Caki2 (cell line): ENCODE measurements at regions of chr2 and their contacts with region 1.

Region 1: DNA sequence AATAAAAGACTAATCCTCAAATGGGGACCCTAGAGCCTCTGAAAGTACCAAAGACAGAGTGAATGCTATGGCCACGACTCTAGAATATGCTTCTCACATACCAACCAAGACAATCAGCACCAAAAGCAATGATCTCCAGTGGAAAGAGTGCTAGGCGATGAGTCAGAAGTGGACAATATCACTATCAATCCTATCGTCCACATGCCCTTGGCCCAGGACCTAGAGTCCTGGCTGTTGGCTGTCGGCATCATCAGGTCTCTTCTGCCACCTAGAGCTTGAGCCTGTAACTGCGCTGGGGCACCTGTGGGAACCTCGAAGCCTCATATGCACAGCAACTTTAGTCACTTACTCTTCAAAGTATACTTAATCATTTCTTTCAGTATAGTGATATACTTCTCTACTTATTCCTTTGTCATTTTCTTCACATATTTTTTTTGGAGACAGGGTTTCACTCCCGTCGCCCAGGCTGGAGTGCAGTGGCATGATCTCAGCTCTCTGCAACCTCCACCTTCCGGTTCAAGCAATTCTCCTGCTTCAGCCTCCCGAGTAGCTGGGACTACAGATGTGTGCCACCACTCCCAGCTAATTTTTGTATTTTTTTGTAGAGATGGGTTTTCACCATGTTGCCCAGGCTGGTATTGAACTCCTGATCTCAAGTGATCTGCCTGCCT is 29.7 kb downstream of the NOL10 start:
- DNase-seq: peak; percentile 46

Region 2: DNA sequence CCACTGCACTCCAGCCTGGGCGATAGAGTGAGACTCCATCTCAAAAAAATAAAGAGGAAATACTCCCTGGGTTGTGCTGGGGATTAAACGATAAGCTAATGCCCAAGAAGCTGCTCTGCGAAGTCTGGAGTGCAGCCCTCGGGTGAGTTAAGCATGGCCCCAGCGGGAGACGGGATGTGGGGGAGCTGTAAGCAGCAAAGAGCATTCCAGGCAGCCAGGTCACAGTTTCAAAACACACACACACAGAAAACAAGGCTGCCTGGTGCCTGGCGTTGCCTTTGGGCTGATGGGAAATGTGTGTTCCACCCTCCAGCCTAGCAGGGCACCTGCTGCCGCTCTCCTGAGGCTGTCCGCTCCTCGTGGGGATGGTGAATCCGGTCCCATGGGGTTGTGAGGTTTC is 236.0 kb before region 1 on chr2:
- in situ Hi-C with region 1: no loop called
- DNase-seq: no peak

Region 3: DNA sequence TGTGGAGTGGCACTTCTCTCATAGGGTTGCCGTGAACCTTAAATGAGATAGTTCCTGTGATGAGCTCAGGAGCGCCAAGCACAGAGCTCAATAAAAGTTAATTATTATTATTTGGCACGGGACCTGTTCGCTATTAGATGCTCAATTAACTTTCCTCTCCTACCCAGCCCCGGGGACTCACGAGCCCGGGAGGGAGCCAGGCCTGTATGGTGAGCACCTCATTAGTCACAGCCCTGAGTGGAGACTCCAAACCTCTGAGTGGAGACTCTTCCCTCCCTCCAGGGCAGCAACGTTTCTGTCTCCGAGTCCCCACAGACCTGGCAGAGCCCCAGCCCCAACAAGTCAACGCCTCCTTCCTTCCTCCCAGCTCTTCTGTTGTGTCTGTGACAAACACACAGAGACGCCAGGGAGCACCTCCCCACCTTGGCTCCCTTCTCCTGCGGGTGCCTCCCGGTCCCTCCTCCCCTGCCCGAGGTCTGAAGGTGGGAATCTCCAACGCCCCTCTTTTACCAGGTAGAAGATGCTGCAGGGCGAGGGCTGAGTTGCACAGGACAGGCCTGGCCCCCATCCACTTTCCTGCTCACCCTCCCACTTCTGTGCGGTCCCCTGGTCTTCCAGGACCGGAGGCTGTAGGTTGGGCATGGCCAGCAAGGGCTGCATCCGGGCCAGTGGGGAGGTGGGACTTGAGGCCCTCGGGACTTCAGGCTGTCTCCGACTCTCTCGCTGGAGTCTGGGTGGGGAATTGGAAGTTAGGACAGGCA is 159.3 kb before region 1 on chr2:
- in situ Hi-C with region 1: loop called (anchors 10 kb)
- DNase-seq: no peak

Region 4: GRCh38 chr2:10911261-10912075 is 251.4 kb after region 1 on chr2 and contains the start of gene KCNF1:
- in situ Hi-C with region 1: no loop called
- DNase-seq: peak; percentile 63
- total RNA-seq, gene KCNF1: 0.17 TPM in 1 of 2 replicates, not detected in the other